ENCODE measurements at regions of chr10 and their contacts with region 1.

Region 1: DNA sequence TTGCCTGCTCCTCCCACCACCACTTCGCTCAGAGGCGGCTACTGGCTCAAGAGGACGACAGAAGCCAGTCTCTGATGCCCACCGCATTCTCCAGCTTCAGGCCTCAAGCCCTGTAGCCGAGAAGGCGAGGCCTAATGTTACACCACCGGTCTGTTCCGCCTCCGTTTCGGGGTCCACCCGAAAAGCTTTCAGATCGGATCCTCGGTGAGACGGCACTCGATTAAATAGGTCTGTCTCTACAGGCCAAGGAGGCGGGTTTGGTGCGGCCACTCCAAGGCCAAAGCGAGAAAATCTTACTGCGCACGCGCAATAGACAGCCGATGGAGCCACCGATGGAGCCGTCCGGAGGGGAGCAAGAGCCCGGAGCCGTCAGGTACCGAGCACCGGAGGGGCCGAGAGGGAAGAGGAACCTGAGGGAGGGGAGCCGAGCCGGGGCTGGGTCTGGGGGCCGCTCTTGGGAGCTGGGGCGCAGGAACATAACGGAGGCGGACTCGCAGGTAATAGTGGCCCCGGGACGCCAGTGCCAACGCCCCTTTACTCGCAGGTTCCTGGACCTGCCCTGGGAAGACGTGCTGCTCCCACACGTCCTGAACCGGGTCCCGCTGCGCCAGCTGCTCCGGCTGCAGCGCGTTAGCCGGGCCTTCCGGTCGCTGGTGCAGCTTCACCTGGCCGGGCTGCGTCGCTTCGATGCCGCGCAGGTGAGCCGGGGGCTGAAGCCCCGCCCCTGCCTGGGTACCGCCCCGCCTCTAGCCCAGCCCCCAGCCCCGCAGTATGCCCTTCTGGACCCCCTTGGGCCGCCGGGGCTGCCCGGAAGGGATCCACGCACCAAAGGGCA is at the start of gene FBXL15:
- DNase-seq: peak; percentile 98
- ATAC-seq: peak; percentile 80
- H3K4me3 Mint-ChIP-seq: peak within 1 kb of the TSS; percentile 96
- H3K27ac Mint-ChIP-seq: peak within 1 kb of the TSS; percentile 87
- H3K4me1 Mint-ChIP-seq: peaks cover 30% of the 10 kb centered on the region
- H3K27me3 Mint-ChIP-seq: peaks cover 14% of the 10 kb centered on the region
- total RNA-seq, gene FBXL15: 5.4 to 11.9 TPM

Region 2: GRCh38 chr10:101481256-101481655 is 939.8 kb before region 1 on chr10:
- CTCF ChIA-PET with region 1: no interaction called
- POLR2A ChIA-PET with region 1: no interaction called
- intact Hi-C with region 1: no loop called
- DNase-seq: no peak
- ATAC-seq: no peak
- H3K4me3 Mint-ChIP-seq: no peak overlapping the region
- H3K27ac Mint-ChIP-seq: no peak overlapping the region
- H3K4me1 Mint-ChIP-seq: no peaks in the 10 kb centered on the region
- H3K27me3 Mint-ChIP-seq: no peaks in the 10 kb centered on the region

Region 3: GRCh38 chr10:102368072-102368471 is 53.0 kb before region 1 on chr10:
- CTCF ChIA-PET with region 1: interaction called, 3 read pairs
- POLR2A ChIA-PET with region 1: no interaction called
- intact Hi-C with region 1: loop called in 1 of 2 experiments (anchors 5 kb)
- DNase-seq: no peak
- ATAC-seq: no peak
- H3K4me3 Mint-ChIP-seq: no peak overlapping the region
- H3K27ac Mint-ChIP-seq: no peak overlapping the region
- H3K4me1 Mint-ChIP-seq: no peaks in the 10 kb centered on the region
- H3K27me3 Mint-ChIP-seq: no peaks in the 10 kb centered on the region

Region 4: GRCh38 chr10:102408728-102409603 is 12.1 kb before region 1 on chr10:
- CTCF ChIA-PET with region 1: interaction called, 31 read pairs
- POLR2A ChIA-PET with region 1: interaction called, 9 read pairs
- intact Hi-C with region 1: loop called (anchors 1 kb)
- DNase-seq: peak; percentile 91
- ATAC-seq: peak; percentile 69
- H3K4me3 Mint-ChIP-seq: peak overlapping the region; percentile 71
- H3K27ac Mint-ChIP-seq: peak overlapping the region; percentile 73
- H3K4me1 Mint-ChIP-seq: peaks cover 35% of the 10 kb centered on the region
- H3K27me3 Mint-ChIP-seq: peaks cover 14% of the 10 kb centered on the region

Region 5: DNA sequence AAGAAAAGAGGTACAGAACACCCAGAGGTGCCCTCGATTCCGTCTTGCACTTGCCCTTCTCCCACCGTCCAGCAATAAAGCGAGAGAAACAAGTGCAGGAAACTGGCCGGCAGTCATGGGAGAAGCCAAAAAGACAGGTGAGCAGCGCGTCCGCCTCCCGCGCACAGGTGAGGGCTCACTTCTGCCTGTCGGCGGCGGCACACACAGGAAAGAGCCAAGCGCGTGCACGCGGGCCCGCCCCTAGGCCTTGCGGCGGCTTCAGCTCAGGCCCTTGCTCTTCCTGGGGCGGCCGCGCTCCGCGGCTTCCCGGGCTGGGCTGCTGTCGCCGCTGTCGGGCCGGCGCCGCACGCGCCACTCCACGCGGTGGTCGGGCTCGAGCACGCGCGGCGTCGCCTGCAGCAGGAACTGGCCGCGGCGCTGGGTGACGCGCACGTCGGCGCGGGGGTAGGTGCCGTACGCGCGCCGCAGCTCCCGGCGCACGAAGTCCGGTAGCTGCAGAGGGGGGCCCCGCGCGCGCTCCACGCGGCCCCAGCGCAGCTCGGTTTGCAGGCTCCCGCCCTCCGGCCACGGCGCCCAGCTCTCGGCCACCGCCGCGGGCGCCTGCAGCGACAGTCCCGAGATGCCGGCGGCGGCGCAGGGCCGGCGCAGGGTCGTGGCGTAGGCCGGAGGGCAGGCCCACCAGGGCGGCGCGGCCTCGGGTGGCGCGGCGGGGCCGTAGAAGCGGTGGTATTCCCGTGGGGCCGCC is 29.3 kb after region 1 on chr10:
- CTCF ChIA-PET with region 1: interaction called, 18 read pairs
- POLR2A ChIA-PET with region 1: interaction called, 4 read pairs
- intact Hi-C with region 1: loop called (anchors 1 kb)
- DNase-seq: peak; percentile 91
- ATAC-seq: peak; percentile 66
- H3K4me3 Mint-ChIP-seq: peak overlapping the region; percentile 95
- H3K27ac Mint-ChIP-seq: peak overlapping the region; percentile 93
- H3K4me1 Mint-ChIP-seq: peaks cover 25% of the 10 kb centered on the region
- H3K27me3 Mint-ChIP-seq: no peaks in the 10 kb centered on the region

Region 6: GRCh38 chr10:102476466-102477141 is 55.6 kb after region 1 on chr10:
- CTCF ChIA-PET with region 1: interaction called, 10 read pairs
- POLR2A ChIA-PET with region 1: interaction called, 3 read pairs
- intact Hi-C with region 1: loop called (anchors 1 to 5 kb)
- DNase-seq: peak; percentile 36
- ATAC-seq: no peak
- H3K4me3 Mint-ChIP-seq: no peak overlapping the region
- H3K27ac Mint-ChIP-seq: peak overlapping the region; percentile 78
- H3K4me1 Mint-ChIP-seq: peaks cover 28% of the 10 kb centered on the region
- H3K27me3 Mint-ChIP-seq: no peaks in the 10 kb centered on the region